Caco-2 (cell line): ENCODE measurements at regions of chr16 and their contacts with region 1.

Region 1: GRCh38 chr16:70395345-70395901 is 43.5 kb downstream of the ST3GAL2 start:
- DNase-seq: peak; percentile 87 to 90
- H3K4me3 ChIP-seq: no peak overlapping the region
- H3K4me3 Mint-ChIP-seq: no peak overlapping the region
- H3K27ac Mint-ChIP-seq: no peak overlapping the region
- H3K4me1 ChIP-seq: peaks cover 20% of the 10 kb centered on the region
- H3K4me1 Mint-ChIP-seq: peaks cover 7% of the 10 kb centered on the region
- H3K27me3 ChIP-seq: no peaks in the 10 kb centered on the region
- H3K27me3 Mint-ChIP-seq: no peaks in the 10 kb centered on the region
- CTCF ChIP-seq: peak; percentile 92 to 95

Region 2: GRCh38 chr16:70342016-70342415 is 53.4 kb before region 1 on chr16:
- CTCF ChIA-PET with region 1: no interaction called
- POLR2A ChIA-PET with region 1: no interaction called
- intact Hi-C with region 1: no loop called
- DNase-seq: no peak
- H3K4me3 ChIP-seq: no peak overlapping the region
- H3K4me3 Mint-ChIP-seq: no peak overlapping the region
- H3K27ac Mint-ChIP-seq: no peak overlapping the region
- H3K4me1 ChIP-seq: no peaks in the 10 kb centered on the region; the same call in 1 of the 2 replicates
- H3K4me1 Mint-ChIP-seq: peaks cover 5% of the 10 kb centered on the region
- H3K27me3 ChIP-seq: no peaks in the 10 kb centered on the region
- H3K27me3 Mint-ChIP-seq: no peaks in the 10 kb centered on the region
- CTCF ChIP-seq: no peak

Region 3: DNA sequence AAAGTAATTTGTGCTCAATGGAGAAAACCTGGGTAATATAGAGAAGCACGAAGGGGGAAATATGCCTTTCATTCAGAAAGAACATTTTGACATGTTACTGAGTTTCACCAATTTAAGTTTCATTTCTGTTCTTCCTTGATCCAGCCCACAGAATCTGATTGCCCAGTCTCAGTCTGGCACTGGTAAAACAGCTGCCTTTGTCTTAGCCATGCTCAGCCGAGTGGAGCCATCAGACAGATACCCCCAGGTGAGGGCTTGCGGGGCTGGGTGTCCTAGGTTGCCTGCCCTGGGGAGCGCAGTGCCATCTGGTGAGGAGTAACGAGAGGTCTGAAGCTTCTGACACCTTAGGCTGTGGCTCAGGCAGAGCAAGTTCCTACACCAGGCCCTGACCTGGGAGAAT is 31.0 kb before region 1 on chr16:
- CTCF ChIA-PET with region 1: interaction called, 11 read pairs
- POLR2A ChIA-PET with region 1: interaction called, 6 read pairs
- intact Hi-C with region 1: no loop called
- DNase-seq: no peak
- H3K4me3 ChIP-seq: no peak overlapping the region
- H3K4me3 Mint-ChIP-seq: no peak overlapping the region
- H3K27ac Mint-ChIP-seq: no peak overlapping the region
- H3K4me1 ChIP-seq: no peaks in the 10 kb centered on the region
- H3K4me1 Mint-ChIP-seq: no peaks in the 10 kb centered on the region
- H3K27me3 ChIP-seq: no peaks in the 10 kb centered on the region
- H3K27me3 Mint-ChIP-seq: no peaks in the 10 kb centered on the region
- CTCF ChIP-seq: no peak

Region 4: DNA sequence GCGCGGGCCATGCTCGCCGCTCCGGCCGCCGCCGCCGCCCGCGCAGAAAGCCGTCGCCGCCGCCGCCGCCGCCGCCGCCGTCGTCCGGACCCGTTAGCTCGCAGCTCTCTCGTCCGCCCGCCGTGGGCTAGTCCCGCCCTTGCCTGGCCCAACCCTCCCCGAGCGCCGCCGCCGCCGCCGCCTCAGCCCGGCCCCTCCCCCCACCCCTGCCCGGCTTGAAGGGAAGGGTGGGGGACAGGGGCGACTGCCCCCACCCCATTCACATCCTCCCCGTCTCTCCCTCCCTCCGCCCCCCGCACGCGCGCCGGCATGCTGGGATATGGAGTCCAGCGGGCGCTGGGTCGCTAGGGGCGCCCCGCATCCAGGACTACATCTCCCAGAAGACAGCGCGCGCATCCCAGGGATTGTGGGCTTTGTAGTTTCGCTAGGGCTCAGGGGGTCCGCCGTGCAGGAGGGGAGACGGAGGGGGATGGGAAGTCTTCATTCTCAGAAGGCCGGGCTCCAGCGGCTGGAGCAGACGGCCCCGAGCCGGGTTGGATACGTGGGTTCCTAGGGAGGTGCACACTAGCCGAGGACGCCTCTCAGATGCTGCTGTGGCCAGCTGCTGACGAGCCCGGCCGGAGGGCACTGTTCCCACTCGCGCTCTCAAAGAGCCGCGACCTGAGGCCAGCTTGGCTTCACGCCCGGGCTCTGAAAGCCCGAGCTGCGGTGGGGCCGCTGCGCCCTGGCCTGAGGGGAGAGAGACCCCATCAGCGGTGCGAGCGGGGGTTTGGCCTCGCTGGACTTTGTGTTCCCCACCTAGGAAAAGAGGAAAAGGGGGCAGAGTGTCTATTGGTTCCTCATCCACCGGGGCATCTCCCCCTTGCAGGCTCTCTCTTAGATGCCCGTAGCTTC is 43.8 kb after region 1 on chr16 and contains the start of gene ST3GAL2:
- CTCF ChIA-PET with region 1: no interaction called
- POLR2A ChIA-PET with region 1: no interaction called
- intact Hi-C with region 1: loop called (anchors 2 kb)
- DNase-seq: peak; percentile 96 to 97
- H3K4me3 ChIP-seq: peak within 1 kb of the TSS; percentile 90
- H3K4me3 Mint-ChIP-seq: peak within 1 kb of the TSS; percentile 92
- H3K27ac Mint-ChIP-seq: peak within 1 kb of the TSS; percentile 67
- H3K4me1 ChIP-seq: peaks cover 45% of the 10 kb centered on the region
- H3K4me1 Mint-ChIP-seq: peaks cover 20% of the 10 kb centered on the region
- H3K27me3 ChIP-seq: no peaks in the 10 kb centered on the region
- H3K27me3 Mint-ChIP-seq: no peaks in the 10 kb centered on the region
- CTCF ChIP-seq: peak; percentile 23 to 46
- total RNA-seq, gene ST3GAL2: 30.3 and 31.1 TPM in 2 replicates

Region 5: GRCh38 chr16:70470927-70471341 is 75.5 kb after region 1 on chr16:
- CTCF ChIA-PET with region 1: interaction called, 10 read pairs
- POLR2A ChIA-PET with region 1: no interaction called
- intact Hi-C with region 1: loop called (anchors 1 kb)
- DNase-seq: peak; percentile 71 to 80
- H3K4me3 ChIP-seq: no peak overlapping the region
- H3K4me3 Mint-ChIP-seq: no peak overlapping the region
- H3K27ac Mint-ChIP-seq: peak overlapping the region; percentile 36
- H3K4me1 ChIP-seq: peaks cover 8% of the 10 kb centered on the region; the same call in 1 of the 2 replicates
- H3K4me1 Mint-ChIP-seq: peaks cover 7% of the 10 kb centered on the region
- H3K27me3 ChIP-seq: no peaks in the 10 kb centered on the region
- H3K27me3 Mint-ChIP-seq: no peaks in the 10 kb centered on the region
- CTCF ChIP-seq: peak; percentile 82 to 86